ENCODE measurements at regions of chr3 and their contacts with region 1.

Region 1: DNA sequence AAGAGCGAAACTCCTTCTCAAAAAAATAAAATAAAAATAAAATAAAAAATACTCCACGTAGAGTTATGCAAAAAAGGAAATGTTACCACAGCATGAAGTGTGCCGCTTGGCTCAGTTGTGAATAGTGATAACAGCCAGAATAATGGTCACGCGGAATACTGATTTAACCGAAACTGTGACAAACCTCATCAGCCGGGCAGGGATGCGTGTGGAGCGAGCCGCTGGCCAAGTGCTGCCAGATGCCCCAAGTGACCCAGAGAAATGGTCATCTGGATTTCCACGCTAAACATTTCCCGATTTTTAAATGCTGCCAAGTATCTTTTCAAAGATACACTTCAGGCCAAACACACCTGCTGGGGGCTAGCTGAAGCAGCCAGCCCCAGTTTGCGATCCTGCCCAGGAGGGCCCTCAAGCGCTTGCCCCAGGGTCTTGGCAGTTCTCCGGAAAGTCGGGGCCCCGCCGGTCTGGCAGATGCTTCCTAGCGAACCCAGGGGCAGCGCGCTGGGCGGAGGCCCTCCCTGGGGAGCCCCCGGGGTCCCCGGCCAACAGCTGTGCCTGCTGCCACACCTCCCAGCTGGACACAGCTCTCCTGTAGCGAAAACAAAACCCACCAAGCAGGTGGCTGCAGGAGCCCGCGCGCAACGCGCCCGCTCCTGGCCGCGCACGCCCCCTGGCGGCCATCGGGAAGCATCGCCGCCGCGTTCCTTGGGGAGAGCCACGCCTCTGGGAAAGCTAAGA is 35.1 kb downstream of the CMTM6 start:
- DNase-seq: peak; percentile 91
- H3K4me3 ChIP-seq: no peak overlapping the region; a peak in 1 of 4 replicates
- H3K27ac ChIP-seq: no peak overlapping the region
- H3K4me1 ChIP-seq: peaks cover 0 to 13% of the 10 kb centered on the region in 2 experiments; a peak in 3 of 4 replicates
- H3K27me3 ChIP-seq: no peaks in the 10 kb centered on the region
- CTCF ChIP-seq: peak; percentile 87
- EP300 ChIP-seq: no peak
- RAD21 ChIP-seq: peak; percentile 83

Region 2: GRCh38 chr3:32296256-32297204 is 171.0 kb before region 1 on chr3:
- CTCF ChIA-PET with region 1: interaction called, 20 read pairs
- POLR2A ChIA-PET with region 1: no interaction called
- DNase-seq: peak; percentile 77
- H3K4me3 ChIP-seq: no peak overlapping the region; a peak in 1 of 4 replicates
- H3K27ac ChIP-seq: no peak overlapping the region
- H3K4me1 ChIP-seq: peaks cover 0 to 2% of the 10 kb centered on the region in 2 experiments; a peak in 1 of 4 replicates
- H3K27me3 ChIP-seq: no peaks in the 10 kb centered on the region
- CTCF ChIP-seq: peak; percentile 91
- EP300 ChIP-seq: no peak
- RAD21 ChIP-seq: peak; percentile 81

Region 3: DNA sequence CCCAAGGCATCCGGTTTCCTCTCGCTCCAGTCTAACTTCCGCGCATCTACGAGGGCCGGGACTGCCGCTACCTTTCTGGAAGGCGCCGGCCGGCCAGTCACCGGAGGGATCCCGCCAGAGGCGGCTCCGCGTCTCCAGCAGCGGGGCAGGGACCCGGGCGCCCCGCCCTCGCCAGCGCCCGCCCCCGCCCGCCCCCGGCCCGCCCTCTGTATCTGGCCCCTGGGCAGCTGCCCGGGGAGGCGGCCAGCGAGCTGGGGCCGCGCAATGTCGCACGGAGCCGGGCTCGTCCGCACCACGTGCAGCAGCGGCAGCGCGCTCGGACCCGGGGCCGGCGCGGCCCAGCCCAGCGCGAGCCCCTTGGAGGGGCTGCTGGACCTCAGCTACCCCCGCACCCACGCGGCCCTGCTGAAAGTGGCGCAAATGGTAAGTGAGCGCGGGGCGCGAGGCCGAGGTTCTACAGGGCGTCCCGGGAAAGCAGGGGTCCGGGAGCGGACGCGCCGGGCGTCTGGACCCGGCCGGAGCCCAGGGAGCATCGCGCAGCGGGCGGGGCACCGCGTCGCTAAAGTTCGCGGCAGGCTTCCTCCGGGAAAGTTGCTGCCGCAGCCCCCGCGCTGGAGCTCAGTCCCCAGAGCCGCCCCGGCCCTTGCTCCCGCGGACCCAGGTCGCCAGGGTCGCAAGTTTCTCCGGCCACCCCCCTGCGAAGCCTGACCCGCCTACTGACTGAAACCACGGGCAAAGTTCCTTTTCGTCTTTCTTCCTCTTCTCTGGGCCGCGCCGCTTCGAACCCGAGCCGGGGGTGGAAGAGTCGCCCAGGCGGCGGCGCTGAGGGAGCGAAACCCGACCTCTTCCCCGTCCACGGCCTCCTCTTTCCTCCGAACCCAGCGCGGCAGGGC is 75.6 kb before region 1 on chr3 and contains the start of gene CMTM7:
- CTCF ChIA-PET with region 1: interaction called, 17 read pairs
- POLR2A ChIA-PET with region 1: no interaction called
- DNase-seq: peak; percentile 90
- H3K4me3 ChIP-seq: peak within 1 kb of the TSS; percentile 68 to 86
- H3K27ac ChIP-seq: peak within 1 kb of the TSS; percentile 39 to 63; a peak in 3 of 4 replicates
- H3K4me1 ChIP-seq: peaks cover 0 to 11% of the 10 kb centered on the region in 2 experiments; a peak in 1 of 4 replicates
- H3K27me3 ChIP-seq: no peaks in the 10 kb centered on the region
- CTCF ChIP-seq: no peak
- EP300 ChIP-seq: no peak
- RAD21 ChIP-seq: no peak
- polyA plus RNA-seq, gene CMTM7: 50.1 and 50.7 TPM in 2 replicates

Region 4: DNA sequence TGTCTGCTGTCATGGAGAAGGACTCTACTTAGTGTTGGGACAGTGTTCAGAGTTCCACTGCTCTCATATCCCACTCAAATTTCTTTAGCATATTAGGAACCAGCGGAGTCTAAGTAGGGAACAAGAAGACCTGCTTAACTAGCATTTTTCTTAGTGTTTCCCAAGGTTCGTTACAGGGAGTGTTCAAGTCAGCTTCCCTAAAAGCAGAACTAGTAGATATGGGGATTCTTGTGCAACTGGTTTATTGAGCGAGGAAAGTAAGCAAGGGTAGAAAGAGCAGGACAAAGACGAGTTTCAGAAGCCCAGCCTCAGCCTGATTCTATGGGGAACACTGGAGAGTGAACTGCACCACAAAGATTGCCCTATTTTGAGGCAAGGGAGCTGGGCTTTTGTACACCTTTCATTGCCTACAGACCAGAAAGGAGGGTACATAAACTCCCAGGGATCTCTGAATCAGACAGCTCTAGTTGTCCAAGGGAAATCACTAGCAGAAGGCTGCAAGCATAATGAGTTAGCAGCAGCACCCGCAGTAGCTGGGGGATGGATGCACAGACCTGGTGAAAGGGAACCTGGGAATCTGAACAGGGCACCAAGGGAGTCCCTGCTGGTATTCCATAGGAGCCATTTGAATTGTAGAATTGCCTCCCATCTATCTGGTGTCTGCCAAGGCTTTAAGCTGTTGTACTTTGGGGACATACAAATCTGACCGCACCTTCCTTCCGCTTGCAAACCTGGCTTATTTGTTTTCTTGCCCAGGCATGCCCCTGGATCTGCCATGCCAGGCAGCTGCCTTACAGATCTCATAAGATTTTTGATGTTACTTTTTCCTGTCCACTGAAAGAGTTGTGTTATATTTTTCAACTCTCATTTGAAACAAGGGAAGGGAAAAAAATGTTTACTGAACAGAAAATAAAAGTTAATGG is 60.8 kb before region 1 on chr3:
- CTCF ChIA-PET with region 1: interaction called, 14 read pairs
- POLR2A ChIA-PET with region 1: no interaction called
- DNase-seq: no peak
- H3K4me3 ChIP-seq: no peak overlapping the region
- H3K27ac ChIP-seq: peak overlapping the region in 1 of 2 experiments; percentile 36; a peak in 2 of 4 replicates
- H3K4me1 ChIP-seq: peaks cover 0 to 16% of the 10 kb centered on the region in 2 experiments; a peak in 1 of 4 replicates
- H3K27me3 ChIP-seq: no peaks in the 10 kb centered on the region
- CTCF ChIP-seq: no peak
- EP300 ChIP-seq: no peak
- RAD21 ChIP-seq: no peak

Region 5: GRCh38 chr3:32438596-32439344 is 28.7 kb before region 1 on chr3:
- CTCF ChIA-PET with region 1: interaction called, 15 read pairs
- POLR2A ChIA-PET with region 1: no interaction called
- DNase-seq: no peak
- H3K4me3 ChIP-seq: no peak overlapping the region
- H3K27ac ChIP-seq: peak overlapping the region in 1 of 2 experiments; percentile 28; a peak in 2 of 4 replicates
- H3K4me1 ChIP-seq: peaks cover 5 to 7% of the 10 kb centered on the region in 2 experiments; a peak in 2 of 4 replicates
- H3K27me3 ChIP-seq: no peaks in the 10 kb centered on the region
- CTCF ChIP-seq: no peak
- EP300 ChIP-seq: no peak
- RAD21 ChIP-seq: no peak

Region 6: DNA sequence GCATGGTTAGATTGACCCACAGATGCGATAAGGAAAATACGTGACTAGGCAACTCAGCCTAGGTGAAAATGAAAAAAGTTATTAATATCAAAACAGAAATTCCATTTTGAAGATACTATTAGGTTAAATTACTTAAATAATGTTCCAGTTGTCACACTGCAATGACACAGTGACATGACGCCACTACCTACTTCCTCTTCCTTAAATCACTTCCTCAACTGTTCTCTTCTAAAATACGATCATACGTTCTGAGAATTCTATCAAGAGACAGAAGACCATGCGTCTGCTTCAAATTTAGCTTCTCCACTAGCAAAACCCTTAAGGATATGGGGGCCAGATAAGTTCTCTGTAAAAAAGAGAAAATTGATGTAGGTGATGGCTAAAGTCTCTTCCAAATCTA is 16.9 kb after region 1 on chr3:
- CTCF ChIA-PET with region 1: interaction called, 57 read pairs
- POLR2A ChIA-PET with region 1: interaction called, 3 read pairs
- DNase-seq: no peak
- H3K4me3 ChIP-seq: no peak overlapping the region
- H3K27ac ChIP-seq: no peak overlapping the region
- H3K4me1 ChIP-seq: no peaks in the 10 kb centered on the region
- H3K27me3 ChIP-seq: no peaks in the 10 kb centered on the region
- CTCF ChIP-seq: no peak
- EP300 ChIP-seq: no peak
- RAD21 ChIP-seq: no peak

Region 7: GRCh38 chr3:32502118-32502945 is 34.8 kb after region 1 on chr3 and contains the start of gene CMTM6:
- CTCF ChIA-PET with region 1: interaction called, 15 read pairs
- POLR2A ChIA-PET with region 1: no interaction called
- DNase-seq: peak; percentile 95
- H3K4me3 ChIP-seq: peak within 1 kb of the TSS; percentile 80 to 94
- H3K27ac ChIP-seq: peak within 1 kb of the TSS; percentile 90 to 94
- H3K4me1 ChIP-seq: peaks cover 0 to 10% of the 10 kb centered on the region in 2 experiments; a peak in 3 of 4 replicates
- H3K27me3 ChIP-seq: no peaks in the 10 kb centered on the region
- CTCF ChIP-seq: no peak
- EP300 ChIP-seq: no peak
- RAD21 ChIP-seq: no peak
- polyA plus RNA-seq, gene CMTM6: 29.8 and 37.8 TPM in 2 replicates

Region 8: DNA sequence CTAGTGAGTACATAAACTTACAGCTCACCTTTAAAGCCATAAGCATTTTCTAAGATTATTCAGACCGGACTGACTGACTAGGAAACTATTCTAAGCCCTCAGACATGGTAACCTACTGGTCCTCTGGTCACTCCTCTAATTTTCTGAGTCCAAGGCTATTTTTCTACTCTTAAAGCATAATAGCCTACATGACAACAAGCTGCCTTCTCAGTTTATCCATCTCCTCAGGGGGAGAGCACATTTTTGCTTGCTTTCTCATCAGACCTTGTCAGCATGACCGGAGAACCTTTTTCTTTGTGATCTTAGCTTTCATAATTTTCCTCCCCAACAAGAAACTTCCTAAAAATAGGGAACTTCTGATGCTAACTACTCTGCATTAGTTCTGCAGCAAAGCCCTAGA is 934.3 kb after region 1 on chr3:
- CTCF ChIA-PET with region 1: no interaction called
- POLR2A ChIA-PET with region 1: no interaction called
- DNase-seq: no peak
- H3K4me3 ChIP-seq: no peak overlapping the region
- H3K27ac ChIP-seq: peak overlapping the region in 1 of 2 experiments; percentile 53; a peak in 2 of 4 replicates
- H3K4me1 ChIP-seq: peaks cover 0 to 12% of the 10 kb centered on the region in 2 experiments; a peak in 1 of 4 replicates
- H3K27me3 ChIP-seq: no peaks in the 10 kb centered on the region
- CTCF ChIP-seq: no peak
- EP300 ChIP-seq: no peak
- RAD21 ChIP-seq: no peak